ENCODE measurements at regions of chr10 and their contacts with region 1.

Region 1: DNA sequence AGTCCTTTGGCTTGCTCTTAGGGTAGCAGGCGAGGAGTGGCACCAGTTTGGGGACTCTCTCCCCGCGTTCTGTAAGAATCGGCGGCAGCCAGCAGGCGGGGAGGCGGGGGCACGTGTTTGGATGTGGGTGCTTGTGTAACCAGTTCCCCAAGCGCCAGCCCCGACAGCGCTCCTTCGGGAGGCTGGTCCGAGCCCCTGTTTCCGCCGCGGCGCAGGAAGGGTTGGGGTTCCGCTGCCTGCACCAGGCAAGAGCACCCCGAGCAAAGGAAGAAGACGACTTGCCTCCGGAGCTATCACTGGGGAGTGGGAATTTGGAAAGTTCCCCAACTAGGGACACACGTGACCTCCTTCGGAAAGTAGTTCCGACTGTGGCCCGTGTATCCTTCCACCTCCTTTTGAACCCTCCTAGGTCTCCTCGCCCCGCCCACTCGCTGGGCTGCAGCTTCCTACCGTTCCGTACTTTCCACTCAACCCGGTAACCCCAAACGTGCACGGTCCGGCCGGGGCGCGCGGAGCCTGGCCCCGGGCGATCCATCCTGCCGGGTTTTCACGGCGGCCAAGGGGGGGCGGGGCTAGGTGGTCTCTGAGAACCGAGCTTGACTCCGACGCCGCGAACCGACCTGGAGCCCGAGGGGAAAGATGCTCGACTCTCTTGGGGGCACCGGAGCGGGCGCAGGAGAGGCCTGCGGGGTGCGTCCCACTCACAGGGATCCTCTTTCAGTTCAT is 1.2 kb downstream of the KLLN start:
- DNase-seq: peak; percentile 91
- H3K4me3 ChIP-seq: peak overlapping the region; percentile 79 to 97
- H3K27ac ChIP-seq: peak overlapping the region; percentile 85 to 97
- H3K4me1 ChIP-seq: peaks cover 0 to 13% of the 10 kb centered on the region in 2 experiments; a peak in 2 of 4 replicates
- H3K27me3 ChIP-seq: no peaks in the 10 kb centered on the region
- CTCF ChIP-seq: no peak
- EP300 ChIP-seq: 0 out of 4 replicates have a peak, but pooled peaks of 1 of the 2 experiments have one; percentile 22
- RAD21 ChIP-seq: peak; percentile 23

Region 2: GRCh38 chr10:87782721-87783120 is 79.4 kb before region 1 on chr10:
- CTCF ChIA-PET with region 1: no interaction called
- POLR2A ChIA-PET with region 1: no interaction called
- DNase-seq: no peak
- H3K4me3 ChIP-seq: no peak overlapping the region
- H3K27ac ChIP-seq: no peak overlapping the region
- H3K4me1 ChIP-seq: no peaks in the 10 kb centered on the region
- H3K27me3 ChIP-seq: no peaks in the 10 kb centered on the region
- CTCF ChIP-seq: no peak
- EP300 ChIP-seq: no peak
- RAD21 ChIP-seq: no peak

Region 3: GRCh38 chr10:87817609-87818504 is 44.3 kb before region 1 on chr10 and contains the start of gene ATAD1:
- CTCF ChIA-PET with region 1: interaction called, 3 read pairs
- POLR2A ChIA-PET with region 1: interaction called, 11 read pairs
- DNase-seq: peak; percentile 92
- H3K4me3 ChIP-seq: peak within 1 kb of the TSS; percentile 86 to 94
- H3K27ac ChIP-seq: peak within 1 kb of the TSS; percentile 91 to 95
- H3K4me1 ChIP-seq: peaks cover 10 to 12% of the 10 kb centered on the region in 2 experiments; a peak in 3 of 4 replicates
- H3K27me3 ChIP-seq: no peaks in the 10 kb centered on the region
- CTCF ChIP-seq: peak; percentile 47
- EP300 ChIP-seq: no peak
- RAD21 ChIP-seq: no peak
- polyA plus RNA-seq, gene ATAD1: 13.5 and 21.0 TPM in 2 replicates

Region 4: DNA sequence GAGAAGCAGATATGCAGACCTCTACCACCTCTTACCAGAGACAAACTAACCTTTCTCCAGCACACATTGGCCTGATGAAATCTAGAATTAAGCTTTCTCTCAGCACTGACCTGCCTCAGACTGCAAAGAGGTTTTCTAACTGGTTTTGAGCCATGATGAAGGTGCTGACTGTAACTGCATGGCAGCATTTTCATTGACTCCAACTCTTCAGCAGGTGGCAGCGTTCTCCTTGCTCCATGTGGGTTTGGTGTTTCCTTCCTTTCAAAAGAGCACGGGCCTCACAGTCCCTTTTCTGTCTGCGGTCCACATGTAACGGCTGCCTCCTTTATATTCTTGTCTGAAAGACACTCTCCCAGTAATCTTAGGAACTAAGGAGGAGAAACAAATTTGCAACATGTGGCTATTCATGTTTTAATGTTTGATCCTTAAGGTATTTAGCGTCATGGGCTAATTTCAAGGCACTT is 11.3 kb before region 1 on chr10:
- CTCF ChIA-PET with region 1: interaction called, 11 read pairs
- POLR2A ChIA-PET with region 1: interaction called, 8 read pairs
- DNase-seq: peak; percentile 57
- H3K4me3 ChIP-seq: no peak overlapping the region; a peak in 1 of 4 replicates
- H3K27ac ChIP-seq: no peak overlapping the region
- H3K4me1 ChIP-seq: peaks cover 2 to 4% of the 10 kb centered on the region in 2 experiments; a peak in 2 of 4 replicates
- H3K27me3 ChIP-seq: no peaks in the 10 kb centered on the region
- CTCF ChIP-seq: peak; percentile 65
- EP300 ChIP-seq: no peak
- RAD21 ChIP-seq: peak; percentile 90

Region 5: DNA sequence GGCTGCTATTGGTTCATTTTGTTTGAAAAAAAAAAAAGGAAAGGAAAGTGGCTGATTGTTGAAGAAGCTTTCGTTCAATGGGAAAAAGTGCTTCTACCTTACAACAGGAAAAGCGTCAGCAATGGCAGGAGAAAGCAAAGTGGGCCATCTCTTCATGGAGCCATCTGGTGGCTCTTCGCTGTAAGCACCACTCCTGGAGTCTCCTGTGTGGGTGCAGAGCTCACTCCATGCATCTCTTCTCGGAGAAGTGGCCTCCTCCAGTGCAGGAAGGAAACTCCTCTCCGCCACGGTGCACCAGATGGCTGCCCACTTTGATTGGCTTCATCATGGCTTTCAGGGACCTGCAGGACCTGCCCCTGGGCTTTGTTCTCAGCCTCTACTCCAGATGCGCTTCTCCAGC is 252.3 kb after region 1 on chr10:
- CTCF ChIA-PET with region 1: interaction called, 13 read pairs
- POLR2A ChIA-PET with region 1: interaction called, 6 read pairs
- DNase-seq: peak; percentile 36
- H3K4me3 ChIP-seq: no peak overlapping the region
- H3K27ac ChIP-seq: no peak overlapping the region
- H3K4me1 ChIP-seq: peaks cover 7 to 14% of the 10 kb centered on the region in 2 experiments; a peak in 3 of 4 replicates
- H3K27me3 ChIP-seq: no peaks in the 10 kb centered on the region
- CTCF ChIP-seq: peak; percentile 50
- EP300 ChIP-seq: no peak
- RAD21 ChIP-seq: peak; percentile 74

Region 6: DNA sequence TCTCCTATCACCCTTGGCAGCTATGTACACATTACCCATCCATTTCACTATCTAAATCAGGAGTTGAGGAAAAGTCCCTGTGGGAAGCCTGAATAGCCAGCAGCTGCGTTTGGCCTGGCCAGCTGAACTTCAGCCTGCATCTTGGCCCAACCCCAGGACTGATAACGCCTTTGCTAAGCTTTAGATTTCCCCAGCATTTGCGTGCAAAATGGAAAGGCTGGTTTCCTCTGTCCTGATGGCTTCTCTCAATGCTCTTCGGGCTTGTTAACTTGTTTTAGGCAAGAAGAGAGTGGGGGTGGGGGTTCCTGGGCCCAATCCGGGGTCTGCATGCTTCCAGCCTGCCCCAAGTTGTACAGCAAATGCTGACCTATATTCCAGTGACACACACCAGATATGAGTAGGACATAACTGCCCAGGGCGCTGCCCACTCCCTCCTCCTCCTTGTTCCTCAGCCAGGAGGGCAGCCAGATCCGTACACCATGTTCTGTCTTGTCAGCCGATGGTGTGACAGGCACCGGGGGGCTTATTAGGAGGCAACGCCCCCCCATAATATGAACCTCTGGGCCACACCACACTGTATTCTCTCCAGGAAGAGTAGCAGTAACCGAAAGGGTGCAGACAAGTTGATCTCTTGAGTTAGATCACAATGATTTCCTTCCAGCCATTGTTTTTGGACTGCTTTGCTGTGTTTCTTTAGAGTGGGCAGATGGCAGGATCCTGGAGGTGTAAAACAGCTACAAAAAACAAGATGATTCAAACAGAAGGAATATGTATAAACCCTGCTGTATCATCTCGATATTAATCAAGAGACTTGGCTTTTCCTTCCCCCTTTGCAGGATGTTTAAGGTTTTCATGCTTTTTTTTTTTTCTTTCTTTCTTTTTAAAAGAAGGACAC is 382.0 kb after region 1 on chr10:
- CTCF ChIA-PET with region 1: no interaction called
- POLR2A ChIA-PET with region 1: interaction called, 12 read pairs
- DNase-seq: peak; percentile 76
- H3K4me3 ChIP-seq: peak overlapping the region; percentile 7 to 17; a peak in 3 of 4 replicates
- H3K27ac ChIP-seq: peak overlapping the region; percentile 41 to 99; a peak in 3 of 4 replicates
- H3K4me1 ChIP-seq: peaks cover 0 to 31% of the 10 kb centered on the region in 2 experiments; a peak in 2 of 4 replicates
- H3K27me3 ChIP-seq: no peaks in the 10 kb centered on the region
- CTCF ChIP-seq: no peak
- EP300 ChIP-seq: peak in 1 of 2 experiments; percentile 86; a peak in 3 of 4 replicates
- RAD21 ChIP-seq: peak; percentile 55

Region 7: DNA sequence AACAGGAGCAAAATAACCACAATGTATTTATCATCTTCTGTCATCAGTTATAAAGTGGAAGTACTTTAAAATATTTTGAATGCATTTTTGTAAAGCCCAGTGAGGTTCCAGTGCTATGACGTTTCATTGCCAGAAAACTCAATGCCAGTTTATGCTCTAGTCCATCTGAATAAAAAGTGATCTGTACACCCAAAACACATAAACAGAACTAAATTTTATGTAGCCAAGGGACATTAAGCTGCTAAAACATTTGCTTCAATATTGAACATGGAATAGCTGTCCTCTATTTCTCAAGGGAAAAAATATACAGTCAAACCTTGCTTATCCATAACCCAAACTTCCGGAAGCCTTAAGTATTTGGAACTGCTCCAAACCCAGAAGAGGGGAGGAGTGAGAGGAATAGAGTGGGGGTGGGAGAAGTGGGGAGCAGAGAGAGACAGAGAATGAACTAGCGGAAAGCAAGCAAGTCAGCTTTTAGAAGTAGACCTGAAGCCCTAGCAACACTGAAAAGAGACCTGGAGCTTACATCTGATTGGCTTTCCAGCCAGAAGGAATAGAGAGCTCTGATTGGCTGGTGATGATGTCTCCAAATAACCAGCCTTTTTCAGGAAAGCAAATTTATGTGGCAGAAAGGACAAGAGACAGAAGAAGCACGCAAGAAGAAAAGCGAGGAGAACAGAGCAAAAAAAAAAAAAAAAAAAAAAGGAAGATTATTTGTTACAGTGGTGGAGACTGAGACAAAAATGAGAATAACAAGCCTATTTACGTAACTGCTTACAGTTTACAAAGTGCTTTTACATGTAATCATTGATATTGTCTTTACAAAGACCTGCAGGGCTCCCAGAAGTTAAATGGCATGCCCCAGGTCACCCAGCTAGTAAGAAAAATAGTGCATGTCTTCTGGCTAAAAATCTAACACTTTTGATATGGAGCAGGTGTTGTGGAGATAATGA is 525.0 kb after region 1 on chr10:
- CTCF ChIA-PET with region 1: interaction called, 42 read pairs
- POLR2A ChIA-PET with region 1: interaction called, 37 read pairs
- DNase-seq: peak; percentile 48
- H3K4me3 ChIP-seq: peak overlapping the region in 1 of 2 experiments; percentile 17; a peak in 1 of 4 replicates
- H3K27ac ChIP-seq: peak overlapping the region; percentile 55 to 98
- H3K4me1 ChIP-seq: peaks cover 9 to 35% of the 10 kb centered on the region in 2 experiments; a peak in 3 of 4 replicates
- H3K27me3 ChIP-seq: no peaks in the 10 kb centered on the region
- CTCF ChIP-seq: no peak
- EP300 ChIP-seq: 0 out of 4 replicates have a peak, but pooled peaks of 1 of the 2 experiments have one; percentile 4
- RAD21 ChIP-seq: 0 out of 2 replicates have a peak, but pooled peaks have one; percentile 0

Region 8: DNA sequence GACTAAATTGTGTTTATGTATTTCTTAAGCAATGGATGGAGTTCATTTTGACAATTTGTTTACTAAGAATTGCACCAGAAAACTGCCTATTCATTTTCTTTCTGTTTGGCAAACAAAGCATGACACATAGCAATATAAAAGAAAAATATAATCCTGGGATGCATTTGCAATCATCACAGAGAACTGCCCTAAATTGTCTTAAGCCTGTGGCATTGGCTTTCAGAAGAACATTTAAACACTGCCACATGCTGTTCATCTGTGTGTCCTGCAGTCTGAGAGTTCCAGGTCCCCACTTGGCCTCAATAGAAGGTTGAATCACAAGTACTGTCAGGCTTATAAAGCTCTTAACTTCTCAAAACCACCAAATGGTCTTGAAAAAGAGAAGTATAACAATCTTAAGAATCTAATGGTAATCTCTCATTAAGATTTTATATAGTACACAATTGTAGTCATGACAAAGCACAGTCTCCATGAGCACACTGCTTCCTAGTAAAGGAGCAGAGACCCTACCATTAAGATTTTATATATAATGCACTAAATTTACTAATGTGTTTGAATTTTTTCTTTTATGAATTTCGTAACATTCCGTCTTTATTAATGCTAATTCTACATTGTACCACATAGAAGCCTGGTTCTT is 691.1 kb after region 1 on chr10:
- CTCF ChIA-PET with region 1: interaction called, 13 read pairs
- POLR2A ChIA-PET with region 1: interaction called, 7 read pairs
- DNase-seq: peak; percentile 48
- H3K4me3 ChIP-seq: no peak overlapping the region
- H3K27ac ChIP-seq: peak overlapping the region in 1 of 2 experiments; percentile 34; a peak in 1 of 4 replicates
- H3K4me1 ChIP-seq: peaks cover 8% of the 10 kb centered on the region in 2 experiments; a peak in 2 of 4 replicates
- H3K27me3 ChIP-seq: no peaks in the 10 kb centered on the region
- CTCF ChIP-seq: peak; percentile 85
- EP300 ChIP-seq: no peak
- RAD21 ChIP-seq: peak; percentile 98

Region 9: DNA sequence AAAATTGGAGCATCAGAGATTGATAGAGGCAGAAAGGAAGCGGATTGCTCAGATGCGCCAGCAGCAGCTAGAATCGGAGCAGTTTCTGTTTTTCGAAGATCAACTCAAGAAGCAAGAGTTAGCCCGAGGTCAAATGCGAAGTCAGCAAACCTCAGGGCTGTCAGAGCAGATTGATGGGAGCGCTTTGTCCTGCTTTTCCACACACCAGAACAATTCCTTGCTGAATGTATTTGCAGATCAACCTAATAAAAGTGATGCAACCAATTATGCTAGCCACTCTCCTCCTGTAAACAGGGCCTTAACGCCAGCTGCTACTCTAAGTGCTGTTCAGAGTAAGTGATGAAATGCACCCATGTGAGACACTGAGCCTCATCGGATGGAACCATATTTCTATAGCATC is 1051.0 kb after region 1 on chr10:
- CTCF ChIA-PET with region 1: no interaction called
- POLR2A ChIA-PET with region 1: no interaction called
- DNase-seq: peak; percentile 38
- H3K4me3 ChIP-seq: no peak overlapping the region
- H3K27ac ChIP-seq: peak overlapping the region; percentile 14 to 93; a peak in 3 of 4 replicates
- H3K4me1 ChIP-seq: peaks cover 10 to 34% of the 10 kb centered on the region in 2 experiments; a peak in 3 of 4 replicates
- H3K27me3 ChIP-seq: no peaks in the 10 kb centered on the region
- CTCF ChIP-seq: no peak
- EP300 ChIP-seq: no peak
- RAD21 ChIP-seq: no peak